IMR-90 (cell line): ENCODE measurements at regions of chr19 and their contacts with region 1.

Region 1: GRCh38 chr19:45886427-45887199 is 672 bp upstream of the IRF2BP1 start:
- DNase-seq: peak; percentile 92
- ATAC-seq: peak; percentile 79
- H3K4me3 ChIP-seq: peak overlapping the region; percentile 74
- H3K27ac ChIP-seq: peak overlapping the region; percentile 92
- H3K4me1 ChIP-seq: peaks cover 10% of the 10 kb centered on the region
- H3K27me3 ChIP-seq: no peaks in the 10 kb centered on the region
- CTCF ChIP-seq: no peak
- POLR2A ChIP-seq: peak; percentile 30; the same call in 1 of the 2 replicates
- RAD21 ChIP-seq: no peak

Region 2: GRCh38 chr19:45862564-45863334 is 23.9 kb before region 1 on chr19 and contains the start of gene SYMPK:
- CTCF ChIA-PET with region 1: interaction called, 3 read pairs
- POLR2A ChIA-PET with region 1: no interaction called
- dilution Hi-C with region 1: no loop called
- in situ Hi-C with region 1: no loop called
- intact Hi-C with region 1: loop called (anchors 2 kb)
- DNase-seq: peak; percentile 97
- ATAC-seq: peak; percentile 97
- H3K4me3 ChIP-seq: peak within 1 kb of the TSS; percentile 72
- H3K27ac ChIP-seq: peak within 1 kb of the TSS; percentile 88
- H3K4me1 ChIP-seq: no peaks in the 10 kb centered on the region
- H3K27me3 ChIP-seq: peaks cover 38% of the 10 kb centered on the region
- CTCF ChIP-seq: no peak
- POLR2A ChIP-seq: peak; percentile 64
- RAD21 ChIP-seq: no peak
- total RNA-seq, gene SYMPK: 33.6 and 35.3 TPM in 2 replicates

Region 3: GRCh38 chr19:45901432-45901911 is 14.9 kb after region 1 on chr19:
- CTCF ChIA-PET with region 1: no interaction called
- POLR2A ChIA-PET with region 1: no interaction called
- dilution Hi-C with region 1: no loop called
- in situ Hi-C with region 1: no loop called
- intact Hi-C with region 1: no loop called
- DNase-seq: peak; percentile 42
- ATAC-seq: no peak
- H3K4me3 ChIP-seq: peak overlapping the region; percentile 70
- H3K27ac ChIP-seq: no peak overlapping the region; the same call in 1 of the 2 replicates
- H3K4me1 ChIP-seq: 0 out of 2 replicates have a peak, but pooled peaks cover 4% of the 10 kb centered on the region
- H3K27me3 ChIP-seq: no peaks in the 10 kb centered on the region
- CTCF ChIP-seq: no peak
- POLR2A ChIP-seq: no peak
- RAD21 ChIP-seq: no peak

Region 4: GRCh38 chr19:45994989-45995714 is 108.5 kb after region 1 on chr19 and contains the start of gene CCDC61:
- CTCF ChIA-PET with region 1: no interaction called
- POLR2A ChIA-PET with region 1: no interaction called
- dilution Hi-C with region 1: no loop called
- in situ Hi-C with region 1: no loop called
- intact Hi-C with region 1: loop called (anchors 5 kb)
- DNase-seq: peak; percentile 99
- ATAC-seq: peak; percentile 98
- H3K4me3 ChIP-seq: peak within 1 kb of the TSS; percentile 83
- H3K27ac ChIP-seq: peak within 1 kb of the TSS; percentile 64
- H3K4me1 ChIP-seq: peaks cover 2% of the 10 kb centered on the region
- H3K27me3 ChIP-seq: peaks cover 2% of the 10 kb centered on the region
- CTCF ChIP-seq: no peak
- POLR2A ChIP-seq: peak; percentile 87
- RAD21 ChIP-seq: no peak
- total RNA-seq, gene CCDC61: 3.2 and 3.6 TPM in 2 replicates